ENCODE measurements at regions of chr19 and their contacts with region 1.

Region 1: DNA sequence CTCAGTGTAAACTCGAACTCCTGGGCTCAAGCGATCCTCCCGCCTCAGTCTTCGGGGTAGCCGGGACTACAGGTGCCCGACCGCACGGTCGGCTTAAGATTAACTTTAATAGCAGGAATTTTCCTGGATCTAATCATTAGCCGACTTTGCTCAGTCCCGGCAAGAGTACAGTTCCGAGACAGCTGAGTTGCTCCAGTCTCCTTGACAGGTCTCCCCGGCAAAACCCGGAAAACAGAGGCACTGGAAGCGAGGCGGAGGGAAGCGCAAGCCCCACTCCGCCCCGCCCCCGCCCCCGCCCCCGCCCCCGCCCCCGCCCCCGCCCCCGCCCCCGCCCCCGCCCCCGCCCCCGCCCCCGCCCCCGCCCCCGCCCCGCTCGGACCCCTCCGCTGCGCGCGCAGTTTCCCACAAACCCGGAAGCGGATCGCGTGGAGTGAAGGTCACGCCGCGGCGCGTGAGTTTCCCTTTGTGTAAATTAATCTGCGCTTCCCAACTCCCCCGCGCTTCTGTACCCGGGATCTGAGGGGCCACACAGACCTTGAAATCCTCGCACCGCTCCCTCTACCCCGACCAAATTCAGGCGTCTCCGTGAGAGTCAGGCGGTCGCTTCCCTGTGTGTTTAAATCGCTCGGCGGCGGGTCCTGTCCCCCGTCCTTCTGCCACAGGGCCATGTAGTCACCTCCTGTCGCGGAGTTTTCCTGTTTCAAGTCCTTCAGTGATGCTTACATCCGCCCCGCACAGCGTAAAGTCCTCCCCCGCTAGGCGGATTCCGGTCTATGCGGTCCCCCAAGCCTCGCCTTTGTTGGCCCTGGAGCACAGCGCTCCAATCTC is at the start of gene ZNF480:
- DNase-seq: peak; percentile 78
- ATAC-seq: peak; percentile 80
- H3K4me3 Mint-ChIP-seq: peak within 1 kb of the TSS; percentile 98
- H3K27ac Mint-ChIP-seq: peak within 1 kb of the TSS; percentile 98
- H3K4me1 Mint-ChIP-seq: peaks cover 21% of the 10 kb centered on the region
- H3K27me3 Mint-ChIP-seq: no peaks in the 10 kb centered on the region
- CTCF ChIP-seq: no peak
- total RNA-seq, gene ZNF480: 24.0 and 25.5 TPM in 2 replicates

Region 2: GRCh38 chr19:52028027-52028779 is 268.8 kb before region 1 on chr19 and contains the start of gene ZNF614:
- CTCF ChIA-PET with region 1: no interaction called
- POLR2A ChIA-PET with region 1: no interaction called
- intact Hi-C with region 1: loop called (anchors 1 kb)
- DNase-seq: peak; percentile 86
- ATAC-seq: peak; percentile 89
- H3K4me3 Mint-ChIP-seq: peak within 1 kb of the TSS; percentile 98
- H3K27ac Mint-ChIP-seq: peak within 1 kb of the TSS; percentile 93
- H3K4me1 Mint-ChIP-seq: peaks cover 29% of the 10 kb centered on the region
- H3K27me3 Mint-ChIP-seq: no peaks in the 10 kb centered on the region
- CTCF ChIP-seq: no peak
- total RNA-seq, gene ZNF614: 14.0 and 14.3 TPM in 2 replicates

Region 3: GRCh38 chr19:52322429-52322828 is 25.4 kb after region 1 on chr19:
- CTCF ChIA-PET with region 1: no interaction called
- POLR2A ChIA-PET with region 1: no interaction called
- intact Hi-C with region 1: no loop called
- DNase-seq: no peak
- ATAC-seq: no peak
- H3K4me3 Mint-ChIP-seq: no peak overlapping the region
- H3K27ac Mint-ChIP-seq: no peak overlapping the region
- H3K4me1 Mint-ChIP-seq: no peaks in the 10 kb centered on the region
- H3K27me3 Mint-ChIP-seq: no peaks in the 10 kb centered on the region
- CTCF ChIP-seq: no peak

Region 4: GRCh38 chr19:52336117-52336790 is 39.3 kb after region 1 on chr19 and contains the start of gene ZNF610:
- CTCF ChIA-PET with region 1: no interaction called
- POLR2A ChIA-PET with region 1: no interaction called
- intact Hi-C with region 1: loop called (anchors 1 kb)
- DNase-seq: peak; percentile 84
- ATAC-seq: peak; percentile 96
- H3K4me3 Mint-ChIP-seq: peak within 1 kb of the TSS; percentile 97
- H3K27ac Mint-ChIP-seq: peak within 1 kb of the TSS; percentile 93
- H3K4me1 Mint-ChIP-seq: peaks cover 14% of the 10 kb centered on the region
- H3K27me3 Mint-ChIP-seq: no peaks in the 10 kb centered on the region
- CTCF ChIP-seq: no peak
- total RNA-seq, gene ZNF610: 1.1 and 2.0 TPM in 2 replicates

Region 5: DNA sequence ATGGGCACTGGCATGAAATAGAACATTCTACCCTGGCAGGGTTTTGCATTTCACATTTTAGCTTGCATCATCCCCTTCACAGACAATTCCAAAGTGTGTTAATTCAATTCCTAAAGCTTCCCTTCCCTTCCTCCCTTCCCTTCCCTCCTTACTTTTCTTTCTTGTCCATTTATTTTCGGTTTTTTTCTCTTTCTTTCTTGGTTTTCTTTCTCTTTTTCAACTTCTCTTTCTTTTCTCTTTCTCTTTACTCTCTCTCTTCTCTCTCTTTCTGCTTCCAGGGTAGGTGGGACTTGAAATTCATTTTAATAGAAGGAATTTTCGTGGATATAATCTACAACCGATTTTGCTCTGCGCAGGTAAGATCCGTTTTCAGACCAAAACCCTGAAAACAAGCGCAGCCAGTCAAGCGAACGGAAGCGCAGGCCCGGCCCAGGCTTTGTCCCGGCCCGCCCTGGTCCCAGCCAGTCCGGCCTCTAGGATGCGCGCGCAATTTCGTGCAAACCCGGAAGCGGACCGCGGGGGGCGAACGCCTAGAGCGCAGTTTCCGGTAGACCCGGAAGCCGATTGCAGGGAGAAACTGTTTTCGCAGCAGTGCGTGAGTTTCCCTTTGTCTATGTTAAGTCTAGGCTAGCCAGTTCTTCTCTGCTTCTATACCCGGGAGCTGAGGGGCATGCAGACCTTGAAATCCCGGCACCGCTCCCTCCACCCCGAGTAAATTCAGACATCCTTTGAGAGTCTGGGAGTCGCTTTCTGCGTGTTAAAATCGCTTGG is 100.5 kb after region 1 on chr19 and contains the start of gene ZNF528:
- CTCF ChIA-PET with region 1: no interaction called
- POLR2A ChIA-PET with region 1: no interaction called
- intact Hi-C with region 1: loop called (anchors 2 kb)
- DNase-seq: peak; percentile 91
- ATAC-seq: peak; percentile 99
- H3K4me3 Mint-ChIP-seq: peak within 1 kb of the TSS; percentile 90
- H3K27ac Mint-ChIP-seq: peak within 1 kb of the TSS; percentile 91
- H3K4me1 Mint-ChIP-seq: peaks cover 18% of the 10 kb centered on the region
- H3K27me3 Mint-ChIP-seq: no peaks in the 10 kb centered on the region
- CTCF ChIP-seq: no peak
- total RNA-seq, gene ZNF528: 29.8 and 40.3 TPM in 2 replicates